Activated naive CD4-positive, alpha-beta T cell treated with anti-CD3 and anti-CD28 coated beads for 36 hours (primary cell): ENCODE measurements at regions of chr4 and their contacts with region 1.

Region 1: DNA sequence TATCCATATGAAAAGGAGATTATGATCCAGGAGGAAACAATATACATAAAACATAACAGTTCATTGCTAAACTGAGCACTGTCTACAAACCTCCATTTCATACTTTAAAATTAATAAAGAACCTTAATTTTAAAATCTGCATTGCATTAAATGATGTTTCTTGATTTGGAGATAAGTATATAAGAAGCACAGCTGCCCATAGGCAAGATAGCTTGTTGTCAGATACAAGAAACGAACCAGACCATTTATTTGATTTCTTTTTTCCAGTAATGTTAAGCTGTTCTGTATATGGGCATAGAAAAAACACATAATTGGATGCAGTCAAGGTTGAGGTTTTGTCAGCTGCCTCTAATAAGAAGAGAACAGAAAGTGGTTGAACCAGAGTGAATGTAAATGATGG is 6.4 kb downstream of the GUF1 start:
- DNase-seq: no peak
- H3K4me3 Mint-ChIP-seq: no peak overlapping the region
- H3K27ac Mint-ChIP-seq: no peak overlapping the region
- H3K4me1 Mint-ChIP-seq: peaks cover 31% of the 10 kb centered on the region
- H3K27me3 Mint-ChIP-seq: no peaks in the 10 kb centered on the region

Region 2: DNA sequence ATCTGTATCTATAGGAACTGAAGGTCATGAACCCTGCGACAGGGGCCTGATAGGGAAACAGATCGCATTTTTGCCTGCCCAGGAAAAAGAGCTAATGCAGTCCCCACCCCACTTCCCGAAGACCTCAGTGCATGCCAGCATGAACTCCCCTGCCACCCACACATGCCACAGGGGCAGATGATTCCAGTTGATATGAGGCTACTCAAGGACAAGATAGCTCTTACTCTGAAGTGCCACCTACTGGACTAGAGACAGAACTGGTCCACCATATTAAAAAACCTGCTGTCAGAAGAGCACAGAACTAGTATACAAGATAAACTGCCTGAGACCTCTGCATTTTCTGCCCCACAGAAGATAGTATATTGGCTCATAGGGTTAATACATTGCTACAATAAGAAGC is 101.3 kb before region 1 on chr4:
- CTCF ChIA-PET with region 1: no interaction called
- intact Hi-C with region 1: no loop called
- DNase-seq: no peak
- H3K4me3 Mint-ChIP-seq: no peak overlapping the region
- H3K27ac Mint-ChIP-seq: no peak overlapping the region
- H3K4me1 Mint-ChIP-seq: no peaks in the 10 kb centered on the region
- H3K27me3 Mint-ChIP-seq: peaks cover 9% of the 10 kb centered on the region

Region 3: DNA sequence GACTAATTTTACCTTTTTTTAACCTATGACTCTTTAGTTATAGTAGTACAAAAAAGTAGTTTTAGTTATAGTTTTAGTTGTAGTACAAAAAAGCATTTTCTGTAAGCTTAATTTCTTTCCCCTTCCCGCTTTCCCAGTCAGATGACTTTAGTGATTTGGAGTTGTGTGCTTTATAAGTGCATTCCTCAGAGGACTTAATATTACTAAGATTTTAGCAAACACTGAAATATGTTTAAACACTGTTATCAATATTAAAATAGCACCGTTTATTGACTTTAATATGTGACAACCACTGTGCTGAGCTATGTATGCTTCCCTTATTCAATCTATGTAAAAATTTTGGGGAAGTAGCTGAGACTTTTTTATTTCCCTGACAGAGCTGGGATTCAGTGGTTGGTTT is 16.4 kb after region 1 on chr4:
- CTCF ChIA-PET with region 1: interaction called, 3 read pairs
- intact Hi-C with region 1: loop called (anchors 2 kb)
- DNase-seq: no peak
- H3K4me3 Mint-ChIP-seq: no peak overlapping the region
- H3K27ac Mint-ChIP-seq: no peak overlapping the region
- H3K4me1 Mint-ChIP-seq: peaks cover 5% of the 10 kb centered on the region
- H3K27me3 Mint-ChIP-seq: no peaks in the 10 kb centered on the region

Region 4: DNA sequence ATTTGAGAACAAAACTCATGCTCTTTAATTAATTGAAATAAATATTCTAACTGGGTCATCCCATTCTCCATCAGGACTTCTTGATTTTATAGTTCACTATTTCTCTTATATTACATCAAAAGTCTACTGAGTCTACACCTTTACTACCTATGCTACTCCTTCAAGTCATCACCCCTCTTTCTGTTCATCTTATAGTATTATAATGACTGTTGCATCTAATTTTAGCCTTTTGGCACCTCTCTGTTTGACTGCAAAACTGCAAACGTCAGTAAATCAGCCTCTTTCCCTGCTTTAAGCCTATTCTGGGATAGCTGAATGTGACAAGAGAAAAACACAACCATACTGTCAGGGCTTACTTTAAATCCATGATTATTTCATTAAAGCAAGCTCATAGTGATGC is 800.1 kb after region 1 on chr4:
- CTCF ChIA-PET with region 1: no interaction called
- intact Hi-C with region 1: no loop called
- DNase-seq: no peak
- H3K4me3 Mint-ChIP-seq: no peak overlapping the region
- H3K27ac Mint-ChIP-seq: no peak overlapping the region
- H3K4me1 Mint-ChIP-seq: no peaks in the 10 kb centered on the region
- H3K27me3 Mint-ChIP-seq: no peaks in the 10 kb centered on the region